Pancreas (tissue), 10 donors: ENCODE measurements at regions of chr6 and their contacts with region 1.

Region 1: GRCh38 chr6:24581084-24581669 is 64.8 kb downstream of the KIAA0319 start:
- DNase-seq: peak; percentile 53 to 86 (median 64)
- ATAC-seq: peak; percentile 64 to 78 (median 78)
- H3K4me3 ChIP-seq: no peak overlapping the region
- H3K27ac ChIP-seq: no peak overlapping the region
- H3K4me1 ChIP-seq: peaks cover 0 to 5% (median 5%) of the 10 kb centered on the region in 3 donors
- H3K27me3 ChIP-seq: no peaks in the 10 kb centered on the region
- CTCF ChIP-seq: peak; percentile 63 to 79 (median 76)

Region 2: DNA sequence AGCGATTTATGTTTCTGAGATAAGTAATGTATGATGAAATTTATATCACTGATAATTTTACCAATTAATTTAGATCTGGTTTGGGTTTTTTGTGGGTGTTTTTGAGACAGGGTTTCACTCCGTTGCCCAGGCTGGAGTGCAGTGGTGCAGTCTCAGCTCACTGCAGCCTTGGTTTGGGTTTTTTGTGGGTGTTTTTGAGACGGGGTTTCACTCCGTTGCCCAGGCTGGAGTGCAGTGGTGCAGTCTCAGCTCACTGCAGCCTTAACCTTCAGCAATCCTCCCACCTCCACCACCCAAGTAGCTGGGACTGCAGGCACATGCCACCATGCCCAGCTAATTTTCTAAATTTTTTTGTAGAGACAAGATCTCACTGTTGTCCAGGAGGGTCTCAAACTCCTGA is 165.4 kb before region 1 on chr6:
- intact Hi-C with region 1: no loop called
- DNase-seq: no peak
- ATAC-seq: no peak
- H3K4me3 ChIP-seq: no peak overlapping the region
- H3K27ac ChIP-seq: no peak overlapping the region
- H3K4me1 ChIP-seq: no peaks in the 10 kb centered on the region
- H3K27me3 ChIP-seq: no peaks in the 10 kb centered on the region
- CTCF ChIP-seq: no peak

Region 3: GRCh38 chr6:24658573-24659511 is 77.7 kb after region 1 on chr6:
- intact Hi-C with region 1: no loop called
- DNase-seq: no peak
- ATAC-seq: peak in 3 of 4 donors; percentile 25 to 69 (median 40)
- H3K4me3 ChIP-seq: no peak overlapping the region
- H3K27ac ChIP-seq: no peak overlapping the region
- H3K4me1 ChIP-seq: peaks cover 0 to 6% (median 4%) of the 10 kb centered on the region in 3 donors
- H3K27me3 ChIP-seq: no peaks in the 10 kb centered on the region
- CTCF ChIP-seq: no peak

Region 4: DNA sequence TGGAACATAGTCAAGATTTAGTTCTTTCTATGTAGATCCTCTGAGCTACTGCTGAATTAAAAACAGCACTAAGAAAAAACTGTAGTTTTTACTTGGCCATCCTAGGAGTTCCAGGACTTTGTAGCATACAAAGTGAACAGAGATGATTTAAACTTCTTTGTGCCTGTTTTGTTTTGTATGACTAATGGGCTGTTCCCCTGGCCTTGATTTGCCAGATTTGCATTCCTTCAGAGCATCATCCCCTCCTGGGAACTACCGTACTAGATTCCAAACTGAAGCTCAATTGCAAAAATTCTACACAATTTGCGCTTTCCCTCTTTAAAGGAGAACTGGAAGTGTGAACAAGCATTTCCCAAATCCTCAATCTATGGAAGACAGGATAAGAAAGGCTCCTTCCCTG is 108.8 kb after region 1 on chr6:
- intact Hi-C with region 1: loop called in 2 of 3 experiments (anchors 5 kb)
- DNase-seq: no peak
- ATAC-seq: no peak
- H3K4me3 ChIP-seq: no peak overlapping the region
- H3K27ac ChIP-seq: no peak overlapping the region
- H3K4me1 ChIP-seq: no peaks in the 10 kb centered on the region
- H3K27me3 ChIP-seq: no peaks in the 10 kb centered on the region
- CTCF ChIP-seq: no peak

Region 5: GRCh38 chr6:24699521-24700359 is 118.6 kb after region 1 on chr6:
- intact Hi-C with region 1: loop called in 2 of 3 experiments (anchors 5 kb)
- DNase-seq: no peak
- ATAC-seq: peak in 2 of 4 donors; percentile 26 to 35
- H3K4me3 ChIP-seq: no peak overlapping the region
- H3K27ac ChIP-seq: peak overlapping the region in 1 of 4 donors; percentile 29
- H3K4me1 ChIP-seq: peaks cover 0 to 12% (median 9%) of the 10 kb centered on the region in 3 donors
- H3K27me3 ChIP-seq: no peaks in the 10 kb centered on the region
- CTCF ChIP-seq: no peak

Region 6: GRCh38 chr6:24766680-24767462 is 185.7 kb after region 1 on chr6:
- intact Hi-C with region 1: loop called in 2 of 3 experiments (anchors 5 to 10 kb)
- DNase-seq: no peak
- ATAC-seq: peak; percentile 82 to 91 (median 90)
- H3K4me3 ChIP-seq: peak overlapping the region in 1 of 4 donors; percentile 7
- H3K27ac ChIP-seq: peak overlapping the region in 2 of 4 donors; percentile 50 to 62
- H3K4me1 ChIP-seq: peaks cover 8 to 12% (median 10%) of the 10 kb centered on the region in 3 donors
- H3K27me3 ChIP-seq: no peaks in the 10 kb centered on the region
- CTCF ChIP-seq: peak in 3 of 4 donors; percentile 14 to 32 (median 30)